SK-N-SH (cell line): ENCODE measurements at regions of chr6 and their contacts with region 1.

Region 1: DNA sequence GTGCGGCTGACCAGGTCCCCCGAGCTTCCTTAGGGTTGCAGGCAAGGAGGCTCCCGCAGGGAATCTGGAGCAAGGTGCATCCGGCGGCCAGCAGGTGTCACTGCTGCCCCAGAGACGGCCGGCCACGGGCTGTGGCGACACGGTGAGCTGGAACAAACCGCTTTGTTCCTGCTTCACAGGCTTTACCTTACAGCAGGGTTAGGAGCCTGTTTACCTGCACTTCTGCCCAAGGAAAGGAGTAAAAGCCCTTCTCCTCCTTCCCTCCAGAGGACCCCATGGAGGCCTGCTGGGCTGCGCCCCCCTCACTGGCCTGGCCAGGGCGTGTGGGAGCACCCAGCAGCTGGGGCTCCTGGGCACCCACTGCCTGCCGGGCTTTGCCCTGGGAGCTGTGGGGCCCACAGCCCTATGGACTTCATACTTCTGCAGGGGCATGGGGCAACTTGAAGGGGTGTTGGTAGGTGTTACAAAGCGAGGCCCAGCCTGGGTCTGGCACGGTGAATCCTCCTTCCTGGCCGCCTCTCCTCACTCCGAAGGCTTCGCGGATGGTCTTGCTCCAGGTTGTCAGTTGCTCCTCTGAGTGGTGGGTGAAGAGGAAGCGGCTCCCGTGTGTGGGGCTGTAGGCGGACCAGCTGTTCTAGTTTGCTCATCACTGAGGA is 88.4 kb downstream of the CDC5L start:
- DNase-seq: peak; percentile 92
- H3K4me3 ChIP-seq: peak overlapping the region in 1 of 2 experiments; percentile 16; a peak in 1 of 4 replicates
- H3K27ac ChIP-seq: no peak overlapping the region
- H3K4me1 ChIP-seq: peaks cover 4 to 6% of the 10 kb centered on the region in 2 experiments; a peak in 2 of 4 replicates
- H3K27me3 ChIP-seq: no peaks in the 10 kb centered on the region
- CTCF ChIP-seq: peak; percentile 91
- EP300 ChIP-seq: no peak
- RAD21 ChIP-seq: peak; percentile 98

Region 2: DNA sequence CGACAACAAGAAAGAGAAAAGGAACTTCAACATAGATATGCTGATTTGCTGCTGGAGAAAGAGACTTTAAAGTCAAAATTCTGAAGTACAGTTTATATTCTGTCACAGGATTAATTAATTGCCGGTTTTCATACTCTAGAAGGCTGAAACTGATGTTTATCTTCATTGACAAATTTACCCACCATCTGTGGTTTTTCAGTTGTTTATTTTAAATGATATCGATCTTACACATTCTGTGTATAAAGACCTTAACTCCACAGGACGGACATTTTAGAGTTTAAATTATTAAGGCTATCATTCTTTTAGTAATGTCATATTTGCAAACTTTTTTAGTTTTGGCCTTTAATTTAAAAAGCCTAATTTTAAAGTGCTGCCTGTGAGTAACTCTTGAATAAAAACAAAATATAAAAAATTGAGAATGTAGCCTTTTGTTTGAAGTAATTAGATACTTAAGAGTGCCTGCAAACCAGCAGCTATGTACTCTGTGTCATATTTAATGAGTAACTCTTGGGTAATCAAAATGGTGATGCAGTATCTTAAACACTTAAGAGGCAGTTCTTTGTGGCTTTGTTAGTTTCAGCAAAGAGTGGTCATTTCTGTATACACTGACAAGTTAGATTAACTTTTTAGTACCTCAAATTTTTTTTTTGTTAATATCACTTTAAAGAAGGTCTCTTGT is 29.1 kb before region 1 on chr6:
- CTCF ChIA-PET with region 1: interaction called, 222 read pairs
- POLR2A ChIA-PET with region 1: no interaction called
- DNase-seq: no peak
- H3K4me3 ChIP-seq: no peak overlapping the region
- H3K27ac ChIP-seq: peak overlapping the region; percentile 28 to 53; a peak in 3 of 4 replicates
- H3K4me1 ChIP-seq: peaks cover 8 to 18% of the 10 kb centered on the region in 2 experiments
- H3K27me3 ChIP-seq: no peaks in the 10 kb centered on the region
- CTCF ChIP-seq: no peak
- EP300 ChIP-seq: 0 out of 4 replicates have a peak, but pooled peaks of 1 of the 2 experiments have one; percentile 8
- RAD21 ChIP-seq: no peak

Region 3: GRCh38 chr6:44508646-44509045 is 32.7 kb after region 1 on chr6:
- CTCF ChIA-PET with region 1: interaction called, 17 read pairs
- POLR2A ChIA-PET with region 1: no interaction called
- DNase-seq: no peak
- H3K4me3 ChIP-seq: no peak overlapping the region
- H3K27ac ChIP-seq: no peak overlapping the region
- H3K4me1 ChIP-seq: peaks cover 0 to 4% of the 10 kb centered on the region in 2 experiments; a peak in 1 of 4 replicates
- H3K27me3 ChIP-seq: no peaks in the 10 kb centered on the region
- CTCF ChIP-seq: no peak
- EP300 ChIP-seq: no peak
- RAD21 ChIP-seq: no peak

Region 4: GRCh38 chr6:44554861-44555260 is 79.0 kb after region 1 on chr6:
- CTCF ChIA-PET with region 1: no interaction called
- POLR2A ChIA-PET with region 1: no interaction called
- DNase-seq: no peak
- H3K4me3 ChIP-seq: no peak overlapping the region
- H3K27ac ChIP-seq: no peak overlapping the region
- H3K4me1 ChIP-seq: no peaks in the 10 kb centered on the region; a peak in 1 of 4 replicates
- H3K27me3 ChIP-seq: peaks cover 4% of the 10 kb centered on the region; the same call in 1 of the 2 replicates
- CTCF ChIP-seq: no peak
- EP300 ChIP-seq: no peak
- RAD21 ChIP-seq: no peak

Region 5: GRCh38 chr6:44630125-44631028 is 154.5 kb after region 1 on chr6:
- CTCF ChIA-PET with region 1: interaction called, 24 read pairs
- POLR2A ChIA-PET with region 1: no interaction called
- DNase-seq: peak; percentile 76
- H3K4me3 ChIP-seq: no peak overlapping the region
- H3K27ac ChIP-seq: no peak overlapping the region
- H3K4me1 ChIP-seq: no peaks in the 10 kb centered on the region
- H3K27me3 ChIP-seq: no peaks in the 10 kb centered on the region
- CTCF ChIP-seq: peak; percentile 78
- EP300 ChIP-seq: no peak
- RAD21 ChIP-seq: peak; percentile 77

Region 6: DNA sequence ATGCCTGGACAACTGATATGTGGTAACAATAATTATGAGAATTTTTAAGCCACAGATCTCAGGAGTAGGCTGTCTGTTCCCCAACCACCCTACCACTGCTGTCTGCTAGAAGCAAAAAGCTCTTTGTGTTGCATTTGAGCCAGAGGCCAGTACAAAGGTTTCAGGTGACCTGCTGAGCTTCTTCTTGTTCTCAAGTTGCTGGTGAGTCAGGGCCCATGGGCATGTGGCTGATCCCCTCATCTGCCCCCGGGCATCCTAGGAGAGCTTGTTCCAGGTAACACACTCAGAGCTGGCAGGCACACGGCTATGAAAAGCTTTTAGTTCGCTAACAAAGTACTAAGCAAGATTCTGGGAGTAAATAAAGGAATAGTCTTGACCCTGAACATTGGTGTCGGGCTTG is 196.9 kb after region 1 on chr6:
- CTCF ChIA-PET with region 1: no interaction called
- POLR2A ChIA-PET with region 1: no interaction called
- DNase-seq: no peak
- H3K4me3 ChIP-seq: no peak overlapping the region
- H3K27ac ChIP-seq: no peak overlapping the region
- H3K4me1 ChIP-seq: peaks cover 2 to 3% of the 10 kb centered on the region in 2 experiments; a peak in 2 of 4 replicates
- H3K27me3 ChIP-seq: no peaks in the 10 kb centered on the region
- CTCF ChIP-seq: no peak
- EP300 ChIP-seq: no peak
- RAD21 ChIP-seq: no peak

Region 7: GRCh38 chr6:45922728-45923351 is 1446.9 kb after region 1 on chr6:
- CTCF ChIA-PET with region 1: interaction called, 11 read pairs
- POLR2A ChIA-PET with region 1: no interaction called
- DNase-seq: peak; percentile 31
- H3K4me3 ChIP-seq: no peak overlapping the region
- H3K27ac ChIP-seq: no peak overlapping the region
- H3K4me1 ChIP-seq: 0 out of 4 replicates have a peak, but pooled peaks cover 0 to 6% of the 10 kb centered on the region in 2 experiments
- H3K27me3 ChIP-seq: no peaks in the 10 kb centered on the region
- CTCF ChIP-seq: peak; percentile 81
- EP300 ChIP-seq: no peak
- RAD21 ChIP-seq: peak; percentile 75